ENCODE measurements at regions of chr1 and their contacts with region 1.

Region 1: DNA sequence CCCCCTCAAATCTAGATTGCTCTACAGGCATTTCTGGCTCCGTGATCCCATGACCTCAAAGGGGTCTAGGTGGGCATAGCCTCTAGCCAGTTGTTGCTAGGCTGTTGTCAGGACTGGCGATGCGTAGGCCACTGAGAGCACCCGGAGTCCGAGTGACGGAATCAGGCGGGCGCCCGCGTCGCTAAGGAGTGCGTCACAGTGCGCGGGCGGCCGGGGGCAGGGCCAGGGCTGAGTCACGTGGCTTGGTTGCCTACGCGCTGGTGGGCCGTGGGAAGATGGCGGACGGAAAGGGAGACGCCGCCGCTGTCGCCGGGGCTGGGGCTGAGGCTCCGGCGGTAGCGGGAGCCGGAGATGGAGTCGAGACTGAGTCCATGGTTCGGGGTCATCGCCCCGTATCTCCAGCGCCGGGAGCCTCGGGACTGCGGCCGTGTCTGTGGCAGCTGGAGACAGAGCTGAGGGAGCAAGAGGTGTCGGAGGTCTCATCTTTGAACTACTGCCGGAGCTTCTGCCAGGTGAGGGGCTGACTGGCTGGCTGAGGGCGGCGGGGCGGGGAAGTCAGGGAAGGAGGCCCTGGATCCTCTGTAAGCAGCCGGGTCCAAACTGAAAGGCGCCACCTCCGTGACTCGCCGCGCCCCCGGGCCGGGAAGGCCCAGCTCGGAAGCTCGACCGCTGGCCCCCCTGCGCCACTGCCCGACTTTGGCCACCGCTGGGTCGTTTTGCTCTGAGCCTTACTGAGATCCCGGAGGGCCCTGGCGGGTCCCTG is at the start of gene RLF:
- DNase-seq: peak; percentile 97
- H3K4me3 Mint-ChIP-seq: peak within 1 kb of the TSS; percentile 10
- H3K27ac Mint-ChIP-seq: no peak within 1 kb of the TSS
- H3K4me1 Mint-ChIP-seq: peaks cover 5% of the 10 kb centered on the region
- H3K27me3 Mint-ChIP-seq: no peaks in the 10 kb centered on the region
- total RNA-seq, gene RLF: 12.5 to 12.9 TPM

Region 2: DNA sequence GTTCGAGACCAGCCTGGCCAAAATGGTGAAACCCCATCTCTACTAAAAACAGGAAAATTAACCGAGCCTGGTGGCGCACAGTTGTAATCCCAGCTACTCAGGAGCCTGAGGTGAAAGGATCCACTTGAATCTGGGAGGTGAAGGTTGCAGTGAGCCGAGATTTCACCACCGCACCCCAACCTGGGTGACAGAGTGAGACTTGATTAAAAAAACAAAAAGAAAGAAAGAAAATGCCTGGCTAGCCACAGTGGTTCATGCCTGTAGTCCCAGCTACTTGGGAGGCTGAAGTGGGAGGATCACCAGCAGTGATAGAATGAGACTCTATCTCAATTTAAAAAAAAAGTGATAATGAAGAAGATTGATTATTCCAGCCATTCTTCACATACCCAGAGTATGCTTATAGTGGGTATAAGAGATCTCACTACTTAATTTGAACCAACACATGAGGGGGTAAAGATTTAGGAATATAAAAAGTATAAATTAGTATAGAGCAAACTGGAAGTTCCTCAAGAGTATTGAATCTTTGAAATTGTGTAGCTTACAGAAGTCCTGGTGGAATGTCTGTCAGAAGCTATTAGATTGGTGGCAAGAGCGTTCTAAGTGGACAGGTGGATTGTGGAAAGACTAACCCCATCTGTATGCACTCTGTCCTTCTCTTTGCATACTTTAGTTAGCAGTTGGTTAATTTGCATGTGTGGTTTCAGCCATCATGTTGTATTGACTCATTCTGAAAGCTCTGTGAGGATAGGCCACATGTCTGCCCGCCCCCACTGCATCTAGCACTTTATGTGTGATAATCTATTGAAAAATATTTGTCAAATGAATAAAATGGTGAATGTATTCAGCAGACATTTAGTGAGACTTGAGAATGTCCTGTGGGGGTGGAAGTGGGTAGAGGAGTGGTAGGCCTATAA is 24.9 kb after region 1 on chr1:
- CTCF ChIA-PET with region 1: interaction called, 3 read pairs
- intact Hi-C with region 1: loop called (anchors 1 kb)
- DNase-seq: peak; percentile 69
- H3K4me3 Mint-ChIP-seq: no peak overlapping the region
- H3K27ac Mint-ChIP-seq: no peak overlapping the region
- H3K4me1 Mint-ChIP-seq: peaks cover 42% of the 10 kb centered on the region
- H3K27me3 Mint-ChIP-seq: no peaks in the 10 kb centered on the region

Region 3: DNA sequence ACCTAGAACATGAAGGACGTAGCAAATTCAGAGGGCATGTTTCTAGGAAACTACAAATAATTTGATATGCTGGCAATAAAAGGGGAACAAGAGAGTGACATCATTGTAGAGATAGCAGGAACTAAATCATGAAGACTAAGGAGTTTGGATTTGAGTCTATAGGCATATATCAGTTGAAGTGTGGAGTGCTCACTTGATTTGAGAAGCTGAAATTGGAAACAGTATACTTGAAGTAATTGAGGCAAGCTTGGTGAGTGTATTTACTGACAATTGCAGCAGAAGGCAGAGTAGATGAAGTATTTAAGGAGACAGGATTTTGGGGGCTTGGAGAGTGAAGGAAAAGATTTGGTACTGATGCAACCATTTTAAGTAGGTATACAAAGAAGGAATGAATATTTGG is 80.1 kb after region 1 on chr1:
- CTCF ChIA-PET with region 1: interaction called, 4 read pairs
- intact Hi-C with region 1: loop called (anchors 1 kb)
- DNase-seq: no peak
- H3K4me3 Mint-ChIP-seq: peak overlapping the region; percentile 20
- H3K27ac Mint-ChIP-seq: peak overlapping the region; percentile 89
- H3K4me1 Mint-ChIP-seq: peaks cover 51% of the 10 kb centered on the region
- H3K27me3 Mint-ChIP-seq: no peaks in the 10 kb centered on the region

Region 4: GRCh38 chr1:40252601-40253000 is 91.3 kb after region 1 on chr1:
- CTCF ChIA-PET with region 1: no interaction called
- intact Hi-C with region 1: no loop called
- DNase-seq: no peak
- H3K4me3 Mint-ChIP-seq: no peak overlapping the region
- H3K27ac Mint-ChIP-seq: no peak overlapping the region
- H3K4me1 Mint-ChIP-seq: peaks cover 9% of the 10 kb centered on the region
- H3K27me3 Mint-ChIP-seq: no peaks in the 10 kb centered on the region

Region 5: GRCh38 chr1:40267767-40268187 is 106.5 kb after region 1 on chr1:
- CTCF ChIA-PET with region 1: no interaction called
- intact Hi-C with region 1: loop called (anchors 2 kb)
- DNase-seq: no peak
- H3K4me3 Mint-ChIP-seq: no peak overlapping the region
- H3K27ac Mint-ChIP-seq: no peak overlapping the region
- H3K4me1 Mint-ChIP-seq: peaks cover 53% of the 10 kb centered on the region
- H3K27me3 Mint-ChIP-seq: no peaks in the 10 kb centered on the region

Region 6: GRCh38 chr1:40394491-40395172 is 233.3 kb after region 1 on chr1:
- CTCF ChIA-PET with region 1: no interaction called
- intact Hi-C with region 1: loop called (anchors 2 kb)
- DNase-seq: peak; percentile 79
- H3K4me3 Mint-ChIP-seq: peak overlapping the region; percentile 48
- H3K27ac Mint-ChIP-seq: peak overlapping the region; percentile 95
- H3K4me1 Mint-ChIP-seq: peaks cover 90% of the 10 kb centered on the region
- H3K27me3 Mint-ChIP-seq: no peaks in the 10 kb centered on the region